ENCODE measurements at regions of chr22 and their contacts with region 1.

Region 1: DNA sequence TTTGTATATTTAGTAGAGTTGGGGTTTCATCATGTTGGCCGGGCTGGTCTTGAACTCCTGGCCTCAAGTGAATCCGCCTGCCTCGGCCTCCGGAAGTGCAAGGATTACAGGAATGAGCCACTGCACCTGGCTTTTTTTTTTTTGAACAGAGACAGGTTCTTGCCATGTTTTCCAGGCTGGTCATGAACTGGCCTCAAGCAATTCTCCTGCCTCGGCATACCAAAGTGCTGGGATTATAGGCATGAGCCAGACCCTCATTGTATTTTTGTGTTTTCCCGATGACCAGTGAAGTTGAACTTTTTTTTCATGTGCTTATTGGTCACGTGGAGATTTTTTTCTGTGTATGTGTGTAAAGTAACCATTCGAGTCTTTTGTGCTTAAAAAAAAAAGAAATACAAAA is 48.2 kb downstream of the KIAA1671 start:
- DNase-seq: no peak
- ATAC-seq: no peak
- H3K4me3 ChIP-seq: no peak overlapping the region
- H3K27ac ChIP-seq: no peak overlapping the region
- H3K4me1 ChIP-seq: peaks cover 36% of the 10 kb centered on the region
- H3K27me3 ChIP-seq: no peaks in the 10 kb centered on the region
- CTCF ChIP-seq: no peak

Region 2: GRCh38 chr22:24087071-24087795 is 913.5 kb before region 1 on chr22:
- CTCF ChIA-PET with region 1: no interaction called
- POLR2A ChIA-PET with region 1: interaction called, 11 read pairs
- in situ Hi-C with region 1: no loop called
- intact Hi-C with region 1: no loop called
- DNase-seq: no peak
- ATAC-seq: no peak
- H3K4me3 ChIP-seq: no peak overlapping the region
- H3K27ac ChIP-seq: no peak overlapping the region
- H3K4me1 ChIP-seq: no peaks in the 10 kb centered on the region
- H3K27me3 ChIP-seq: no peaks in the 10 kb centered on the region
- CTCF ChIP-seq: no peak

Measured in Panc1 (cell line).